Naive thymus-derived CD4-positive, alpha-beta T cell (primary cell): ENCODE measurements at regions of chr4 and their contacts with region 1.

Region 1: DNA sequence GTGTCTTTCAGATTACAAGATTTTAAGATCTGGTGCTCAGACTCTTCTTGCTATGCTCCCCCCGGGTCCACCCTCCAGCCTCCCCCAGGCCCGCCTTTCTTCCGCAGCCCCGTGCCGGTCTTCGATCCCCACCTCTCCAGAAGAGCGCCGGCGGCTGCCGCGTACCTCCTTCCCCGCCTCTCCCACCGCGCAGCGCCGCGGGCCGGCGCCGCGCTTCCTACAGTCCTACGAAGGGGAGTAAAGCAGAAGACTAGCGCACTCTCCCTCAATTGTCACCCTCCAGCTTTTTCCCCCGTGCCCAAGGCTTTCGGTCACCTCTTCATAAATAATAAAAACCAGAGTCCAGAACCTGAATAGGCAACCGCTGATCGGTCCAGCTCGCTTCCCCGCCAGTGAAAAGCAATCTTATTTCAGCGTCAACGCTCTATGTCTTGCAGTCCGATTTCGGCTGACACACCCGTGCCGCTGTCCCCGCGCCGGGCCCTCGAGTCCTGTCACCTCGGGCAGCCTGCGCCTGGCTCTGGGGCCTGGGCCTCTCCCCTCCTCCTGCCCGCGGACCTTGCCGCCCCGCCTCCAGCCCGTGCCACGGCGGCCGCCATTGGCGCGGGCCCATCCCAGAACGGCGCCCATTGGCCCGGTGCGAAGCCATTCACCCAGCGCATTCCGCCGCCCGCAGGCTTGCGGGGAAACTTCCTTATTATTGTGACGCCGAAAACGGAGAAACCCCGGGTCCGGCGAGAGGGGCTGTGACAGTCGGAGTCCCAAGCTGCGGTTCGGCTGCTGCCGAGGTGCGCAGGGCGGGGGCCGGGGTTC is at the start of gene HERC3:
- DNase-seq: peak; percentile 87 to 92 (median 91)
- ATAC-seq: peak; percentile 94
- H3K4me3 ChIP-seq: peak within 1 kb of the TSS; percentile 60
- H3K4me3 Mint-ChIP-seq: peak within 1 kb of the TSS; percentile 94 to 100 (median 98)
- H3K27ac ChIP-seq: peak within 1 kb of the TSS; percentile 93
- H3K27ac Mint-ChIP-seq: peak within 1 kb of the TSS; percentile 83 to 99 (median 97)
- H3K4me1 ChIP-seq: peaks cover 10 to 20% of the 10 kb centered on the region in 2 donors
- H3K4me1 Mint-ChIP-seq: peaks cover 34 to 58% (median 49%) of the 10 kb centered on the region in 7 donors
- H3K27me3 ChIP-seq: no peaks in the 10 kb centered on the region
- H3K27me3 Mint-ChIP-seq: peaks cover 0 to 31% (median 0%) of the 10 kb centered on the region in 5 donors
- total RNA-seq, gene HERC3: 38.1 to 130 (median 104) TPM

Region 2: GRCh38 chr4:87390891-87391575 is 1201.0 kb before region 1 on chr4 and contains the start of gene HSD17B11:
- CTCF ChIA-PET with region 1: no interaction called
- POLR2A ChIA-PET with region 1: no interaction called
- intact Hi-C with region 1: loop called (anchors 5 to 10 kb)
- DNase-seq: peak; percentile 44 to 83 (median 79)
- ATAC-seq: peak; percentile 99
- H3K4me3 ChIP-seq: peak within 1 kb of the TSS; percentile 85
- H3K4me3 Mint-ChIP-seq: peak within 1 kb of the TSS; percentile 87 to 99 (median 97)
- H3K27ac ChIP-seq: peak within 1 kb of the TSS; percentile 82
- H3K27ac Mint-ChIP-seq: peak within 1 kb of the TSS; percentile 83 to 96 (median 94)
- H3K4me1 ChIP-seq: peaks cover 10 to 17% of the 10 kb centered on the region in 2 donors
- H3K4me1 Mint-ChIP-seq: peaks cover 32 to 66% (median 57%) of the 10 kb centered on the region in 7 donors
- H3K27me3 ChIP-seq: no peaks in the 10 kb centered on the region
- H3K27me3 Mint-ChIP-seq: peaks cover 0 to 14% (median 0%) of the 10 kb centered on the region in 5 donors
- total RNA-seq, gene HSD17B11: 34.3 to 74.4 (median 61.0) TPM

Region 3: DNA sequence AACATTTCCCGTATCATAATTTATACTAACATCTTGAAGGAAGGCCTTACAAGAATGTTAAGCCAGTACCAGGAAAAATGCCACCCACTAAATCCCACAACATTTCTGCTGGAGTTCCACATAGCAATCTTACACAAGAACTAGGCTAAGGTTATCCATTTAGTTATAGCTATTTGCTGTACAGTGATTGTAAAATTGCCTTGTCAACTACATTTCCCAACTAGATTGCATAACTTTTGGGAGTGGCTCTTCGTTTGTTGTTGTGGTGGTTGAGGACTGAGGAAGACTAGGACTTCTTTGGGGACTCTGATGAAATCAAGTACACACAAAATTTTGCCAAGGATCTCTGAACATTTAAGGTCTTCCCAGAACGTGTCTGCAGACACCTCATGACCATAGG is 784.6 kb before region 1 on chr4:
- CTCF ChIA-PET with region 1: no interaction called
- POLR2A ChIA-PET with region 1: no interaction called
- intact Hi-C with region 1: no loop called
- DNase-seq: no peak
- ATAC-seq: no peak
- H3K4me3 ChIP-seq: no peak overlapping the region
- H3K4me3 Mint-ChIP-seq: no peak overlapping the region
- H3K27ac ChIP-seq: no peak overlapping the region
- H3K27ac Mint-ChIP-seq: no peak overlapping the region
- H3K4me1 ChIP-seq: no peaks in the 10 kb centered on the region
- H3K4me1 Mint-ChIP-seq: no peaks in the 10 kb centered on the region
- H3K27me3 ChIP-seq: no peaks in the 10 kb centered on the region
- H3K27me3 Mint-ChIP-seq: peaks cover 0 to 5% (median 0%) of the 10 kb centered on the region in 5 donors

Region 4: DNA sequence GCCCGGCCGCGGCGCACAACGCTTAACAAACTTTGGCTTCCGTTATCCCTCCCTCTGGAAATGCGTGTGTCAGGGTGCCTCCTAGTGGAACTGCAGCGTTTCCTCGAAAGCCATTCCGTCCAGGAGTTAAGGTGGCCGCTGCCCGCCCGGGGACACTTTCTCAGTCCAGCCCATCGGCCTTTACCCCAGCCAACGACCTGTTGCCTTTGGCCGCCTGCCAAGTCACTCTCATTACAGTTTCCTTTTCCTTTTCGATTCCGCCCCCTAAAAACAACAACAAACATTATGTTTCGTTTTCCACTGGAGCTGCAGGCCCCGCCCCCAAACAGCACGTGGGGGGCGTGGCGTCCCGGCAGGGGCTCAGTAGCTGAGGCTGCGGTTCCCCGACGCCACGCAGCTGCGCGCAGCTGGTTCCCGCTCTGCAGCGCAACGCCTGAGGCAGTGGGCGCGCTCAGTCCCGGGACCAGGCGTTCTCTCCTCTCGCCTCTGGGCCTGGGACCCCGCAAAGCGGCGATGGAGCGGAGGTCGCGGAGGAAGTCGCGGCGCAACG is 135.2 kb before region 1 on chr4 and contains the start of gene HERC5:
- CTCF ChIA-PET with region 1: no interaction called
- POLR2A ChIA-PET with region 1: interaction called, 6 read pairs
- intact Hi-C with region 1: loop called (anchors 2 kb)
- DNase-seq: peak; percentile 90 to 94 (median 92)
- ATAC-seq: peak; percentile 98
- H3K4me3 ChIP-seq: peak within 1 kb of the TSS; percentile 100
- H3K4me3 Mint-ChIP-seq: peak within 1 kb of the TSS; percentile 87 to 100 (median 98)
- H3K27ac ChIP-seq: peak within 1 kb of the TSS; percentile 72
- H3K27ac Mint-ChIP-seq: peak within 1 kb of the TSS; percentile 94 to 100 (median 99)
- H3K4me1 ChIP-seq: peaks cover 5 to 6% of the 10 kb centered on the region in 2 donors
- H3K4me1 Mint-ChIP-seq: peaks cover 10 to 52% (median 37%) of the 10 kb centered on the region in 7 donors
- H3K27me3 ChIP-seq: no peaks in the 10 kb centered on the region
- H3K27me3 Mint-ChIP-seq: no peaks in the 10 kb centered on the region
- total RNA-seq, gene HERC5: 11.8 to 52.5 (median 14.1) TPM

Region 5: GRCh38 chr4:88605736-88606135 is 13.7 kb after region 1 on chr4:
- CTCF ChIA-PET with region 1: interaction called, 3 read pairs
- POLR2A ChIA-PET with region 1: interaction called, 167 read pairs
- intact Hi-C with region 1: loop called in 1 of 2 experiments (anchors 1 kb)
- DNase-seq: peak in 1 of 9 donors; percentile 18
- ATAC-seq: peak; percentile 46
- H3K4me3 ChIP-seq: no peak overlapping the region
- H3K4me3 Mint-ChIP-seq: peak overlapping the region; percentile 22 to 73 (median 53)
- H3K27ac ChIP-seq: no peak overlapping the region
- H3K27ac Mint-ChIP-seq: peak overlapping the region in 8 of 9 donors; percentile 21 to 99 (median 74)
- H3K4me1 ChIP-seq: peaks cover 24 to 27% of the 10 kb centered on the region in 2 donors
- H3K4me1 Mint-ChIP-seq: peaks cover 39 to 86% (median 81%) of the 10 kb centered on the region in 7 donors
- H3K27me3 ChIP-seq: no peaks in the 10 kb centered on the region
- H3K27me3 Mint-ChIP-seq: no peaks in the 10 kb centered on the region

Region 6: DNA sequence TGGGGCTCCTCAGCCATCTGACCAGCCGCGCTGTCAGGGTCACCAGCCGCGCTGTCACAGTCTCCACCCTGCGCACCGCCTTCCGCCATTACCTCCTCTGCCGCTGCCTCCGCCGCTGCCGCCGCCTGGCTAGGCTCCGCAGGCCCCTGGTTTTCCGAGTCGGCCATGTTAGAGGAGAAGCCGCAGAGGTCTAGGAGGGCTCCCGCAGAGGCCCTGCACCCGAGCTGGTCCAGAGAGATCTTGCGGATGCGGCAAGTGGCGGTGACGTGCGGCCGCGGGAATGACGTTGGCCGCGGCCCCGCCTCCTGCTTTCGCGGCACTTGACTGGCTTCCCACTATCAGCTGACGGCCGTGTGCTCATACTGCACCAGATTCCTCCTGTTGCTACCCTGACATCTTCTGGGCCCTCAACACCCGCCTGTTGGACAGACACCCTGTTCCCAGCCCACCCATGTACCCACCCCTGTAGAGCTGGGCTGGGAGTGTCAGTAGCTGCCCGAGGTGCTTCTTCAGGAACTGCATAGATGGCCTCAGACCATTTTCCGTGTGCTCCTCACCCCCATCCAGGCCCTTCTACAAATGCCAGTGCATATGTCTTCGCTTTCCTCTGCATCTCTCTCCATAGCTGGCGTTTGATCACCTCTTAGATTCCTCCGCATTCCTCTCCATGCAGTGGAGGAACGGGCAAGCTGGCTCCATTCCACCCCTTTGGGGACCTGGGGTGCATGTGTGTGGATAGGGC is 105.8 kb after region 1 on chr4 and contains the start of gene NAP1L5:
- CTCF ChIA-PET with region 1: no interaction called
- POLR2A ChIA-PET with region 1: no interaction called
- intact Hi-C with region 1: loop called (anchors 2 to 5 kb)
- DNase-seq: peak; percentile 57 to 88 (median 81)
- ATAC-seq: peak; percentile 95
- H3K4me3 ChIP-seq: peak within 1 kb of the TSS; percentile 68
- H3K4me3 Mint-ChIP-seq: peak within 1 kb of the TSS; percentile 82 to 92 (median 88)
- H3K27ac ChIP-seq: peak within 1 kb of the TSS; percentile 79
- H3K27ac Mint-ChIP-seq: peak within 1 kb of the TSS; percentile 79 to 96 (median 94)
- H3K4me1 ChIP-seq: peaks cover 0 to 13% of the 10 kb centered on the region in 2 donors
- H3K4me1 Mint-ChIP-seq: peaks cover 5 to 35% (median 22%) of the 10 kb centered on the region in 7 donors
- H3K27me3 ChIP-seq: no peaks in the 10 kb centered on the region
- H3K27me3 Mint-ChIP-seq: no peaks in the 10 kb centered on the region
- total RNA-seq, gene NAP1L5: 1.4 to 11.7 (median 4.5) TPM